T-cell (primary cell): ENCODE measurements at regions of chr10 and their contacts with region 1.

Region 1: DNA sequence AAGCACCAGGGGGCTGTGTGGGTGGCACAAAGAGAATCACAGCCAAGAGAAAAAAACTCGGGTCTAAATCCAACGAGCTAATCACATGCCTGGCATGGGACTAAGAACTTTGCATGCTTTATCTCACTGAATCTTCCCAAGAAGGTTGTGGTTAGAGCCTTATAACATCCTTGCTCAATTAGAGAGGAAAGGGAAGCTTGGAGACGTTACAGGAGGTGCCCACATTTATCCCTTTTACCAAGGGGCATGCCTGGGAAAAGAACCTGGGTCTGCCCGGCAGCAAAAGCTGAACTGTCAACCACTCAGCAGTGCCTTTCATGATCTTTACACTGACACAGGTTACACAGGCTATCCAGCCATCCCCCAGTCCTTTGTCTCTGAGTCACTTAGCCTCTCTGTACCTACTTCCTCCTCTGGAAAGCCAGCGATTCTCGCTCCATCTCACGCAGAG is 190.1 kb downstream of the PRPF18 start:
- DNase-seq: no peak
- ATAC-seq: no peak
- H3K4me3 ChIP-seq: no peak overlapping the region
- H3K4me3 Mint-ChIP-seq: no peak overlapping the region
- H3K27ac ChIP-seq: no peak overlapping the region
- H3K27ac Mint-ChIP-seq: no peak overlapping the region
- H3K4me1 ChIP-seq: peaks cover 0 to 3% of the 10 kb centered on the region in 2 experiments
- H3K4me1 Mint-ChIP-seq: peaks cover 0 to 7% (median 4%) of the 10 kb centered on the region in 3 donors
- H3K27me3 ChIP-seq: peaks cover 0 to 20% of the 10 kb centered on the region in 2 experiments
- H3K27me3 Mint-ChIP-seq: peaks cover 15 to 32% of the 10 kb centered on the region in 2 donors

Region 2: GRCh38 chr10:13659897-13660550 is 116.9 kb before region 1 on chr10:
- CTCF ChIA-PET with region 1: interaction called in 1 of 2 experiments, 18 read pairs
- POLR2A ChIA-PET with region 1: no interaction called
- DNase-seq: peak; percentile 23 to 77 (median 61)
- ATAC-seq: peak; percentile 44 to 65 (median 58)
- H3K4me3 ChIP-seq: peak overlapping the region in 1 of 2 donors; percentile 35
- H3K4me3 Mint-ChIP-seq: peak overlapping the region in 1 of 3 donors; percentile 45
- H3K27ac ChIP-seq: no peak overlapping the region
- H3K27ac Mint-ChIP-seq: no peak overlapping the region
- H3K4me1 ChIP-seq: peaks cover 9 to 20% of the 10 kb centered on the region in 2 experiments
- H3K4me1 Mint-ChIP-seq: peaks cover 9 to 21% (median 11%) of the 10 kb centered on the region in 3 donors
- H3K27me3 ChIP-seq: peaks cover 0 to 6% of the 10 kb centered on the region in 2 experiments
- H3K27me3 Mint-ChIP-seq: no peaks in the 10 kb centered on the region

Region 3: DNA sequence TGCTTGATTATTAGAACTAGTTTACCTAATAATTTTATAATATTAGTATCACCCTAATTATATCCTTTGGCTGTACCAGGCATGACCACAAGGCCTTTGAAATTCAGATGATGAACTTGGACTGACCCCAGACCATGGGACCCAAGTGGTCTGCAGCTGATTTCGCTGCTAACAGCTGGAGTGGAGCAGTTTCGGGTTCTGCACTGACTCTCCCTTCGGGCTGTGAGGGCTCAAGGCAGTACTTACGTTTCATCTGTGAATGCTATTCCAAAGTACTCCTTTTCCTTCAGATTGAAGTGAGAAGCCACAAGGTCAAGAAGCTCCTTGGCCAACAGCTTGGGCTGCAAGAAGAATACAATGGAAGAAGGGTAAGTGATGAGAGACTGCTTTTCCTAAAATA is 33.7 kb after region 1 on chr10:
- CTCF ChIA-PET with region 1: no interaction called
- POLR2A ChIA-PET with region 1: no interaction called
- DNase-seq: no peak
- ATAC-seq: no peak
- H3K4me3 ChIP-seq: no peak overlapping the region
- H3K4me3 Mint-ChIP-seq: no peak overlapping the region
- H3K27ac ChIP-seq: no peak overlapping the region
- H3K27ac Mint-ChIP-seq: no peak overlapping the region
- H3K4me1 ChIP-seq: peaks cover 5 to 13% of the 10 kb centered on the region in 2 experiments
- H3K4me1 Mint-ChIP-seq: peaks cover 12 to 20% (median 18%) of the 10 kb centered on the region in 3 donors
- H3K27me3 ChIP-seq: peaks cover 0 to 7% of the 10 kb centered on the region in 2 experiments
- H3K27me3 Mint-ChIP-seq: no peaks in the 10 kb centered on the region